ENCODE measurements at regions of chr10 and their contacts with region 1.

Region 1: GRCh38 chr10:29585488-29585980 is 49.2 kb downstream of the SVIL start:
- DNase-seq: no peak
- H3K4me3 Mint-ChIP-seq: no peak overlapping the region
- H3K27ac Mint-ChIP-seq: no peak overlapping the region
- H3K4me1 Mint-ChIP-seq: peaks cover 61% of the 10 kb centered on the region
- H3K27me3 Mint-ChIP-seq: no peaks in the 10 kb centered on the region
- CTCF ChIP-seq: no peak

Region 2: GRCh38 chr10:29535012-29535777 is 50.3 kb before region 1 on chr10:
- CTCF ChIA-PET with region 1: interaction called, 16 read pairs
- intact Hi-C with region 1: loop called (anchors 5 kb)
- DNase-seq: peak; percentile 93
- H3K4me3 Mint-ChIP-seq: peak overlapping the region; percentile 62
- H3K27ac Mint-ChIP-seq: peak overlapping the region; percentile 90
- H3K4me1 Mint-ChIP-seq: peaks cover 52% of the 10 kb centered on the region
- H3K27me3 Mint-ChIP-seq: no peaks in the 10 kb centered on the region
- CTCF ChIP-seq: peak; percentile 74

Region 3: GRCh38 chr10:29618341-29619171 is 33.0 kb after region 1 on chr10:
- CTCF ChIA-PET with region 1: interaction called, 10 read pairs
- intact Hi-C with region 1: no loop called
- DNase-seq: peak; percentile 81
- H3K4me3 Mint-ChIP-seq: peak overlapping the region; percentile 66
- H3K27ac Mint-ChIP-seq: peak overlapping the region; percentile 92
- H3K4me1 Mint-ChIP-seq: peaks cover 65% of the 10 kb centered on the region
- H3K27me3 Mint-ChIP-seq: no peaks in the 10 kb centered on the region
- CTCF ChIP-seq: no peak

Measured in Calu3 (cell line).